K562 (cell line): ENCODE measurements at regions of chr7 and their contacts with region 1.

Region 1: GRCh38 chr7:43884209-43884608 is 14.9 kb upstream of the MRPS24 start:
- DNase-seq: no peak
- ATAC-seq: peak; percentile 63
- H3K4me3 ChIP-seq: no peak overlapping the region
- H3K27ac ChIP-seq: no peak overlapping the region
- H3K4me1 ChIP-seq: peaks cover 0 to 2% of the 10 kb centered on the region in 2 experiments; a peak in 1 of 5 replicates
- H3K27me3 ChIP-seq: no peaks in the 10 kb centered on the region
- CTCF ChIP-seq: no peak
- EP300 ChIP-seq: no peak
- POLR2A ChIP-seq: no peak
- RAD21 ChIP-seq: no peak

Region 2: GRCh38 chr7:43872406-43873110 is 11.7 kb before region 1 on chr7:
- CTCF ChIA-PET with region 1: no interaction called
- POLR2A ChIA-PET with region 1: interaction called, 19 read pairs
- in situ Hi-C with region 1: no loop called
- intact Hi-C with region 1: no loop called
- DNase-seq: peak; percentile 34 to 55 (median 46)
- ATAC-seq: peak; percentile 5
- H3K4me3 ChIP-seq: no peak overlapping the region
- H3K27ac ChIP-seq: peak overlapping the region; percentile 74
- H3K4me1 ChIP-seq: peaks cover 22 to 31% of the 10 kb centered on the region in 2 experiments; a peak in 4 of 5 replicates
- H3K27me3 ChIP-seq: no peaks in the 10 kb centered on the region
- CTCF ChIP-seq: no peak
- EP300 ChIP-seq: no peak
- POLR2A ChIP-seq: no peak; the same call in 1 of the 2 replicates
- RAD21 ChIP-seq: no peak